GM23248 (cell line): ENCODE measurements at regions of chr2 and their contacts with region 1.

Region 1: GRCh38 chr2:69306822-69307578 is 80.0 kb downstream of the GFPT1 start:
- DNase-seq: peak; percentile 95
- H3K4me3 ChIP-seq: peak overlapping the region; percentile 73
- H3K27ac ChIP-seq: peak overlapping the region; percentile 80
- H3K4me1 ChIP-seq: peaks cover 38% of the 10 kb centered on the region
- H3K27me3 ChIP-seq: no peaks in the 10 kb centered on the region

Region 2: GRCh38 chr2:69012310-69013141 is 294.5 kb before region 1 on chr2:
- in situ Hi-C with region 1: loop called (anchors 10 kb)
- DNase-seq: peak; percentile 88
- H3K4me3 ChIP-seq: peak overlapping the region; percentile 91
- H3K27ac ChIP-seq: peak overlapping the region; percentile 70
- H3K4me1 ChIP-seq: peaks cover 50% of the 10 kb centered on the region
- H3K27me3 ChIP-seq: no peaks in the 10 kb centered on the region

Region 3: GRCh38 chr2:69411120-69411519 is 104.1 kb after region 1 on chr2:
- in situ Hi-C with region 1: no loop called
- DNase-seq: no peak
- H3K4me3 ChIP-seq: no peak overlapping the region
- H3K27ac ChIP-seq: no peak overlapping the region
- H3K4me1 ChIP-seq: no peaks in the 10 kb centered on the region
- H3K27me3 ChIP-seq: no peaks in the 10 kb centered on the region